Activated T-helper 2 cell treated with anti-CD3 and anti-CD28 coated beads, Interferon-gamma antibody, Interleukin-2, Interleukin-4, amounts not matched to agents 10 μg/mL and 5 μg/mL and 100 μg/mL, durations not matched to agents 14 hours and 24 hours and 36 hours (primary cell): ENCODE measurements at regions of chr3 and their contacts with region 1.

Region 1: GRCh38 chr3:111859974-111860859 is 1.2 kb downstream of the PHLDB2 start:
- DNase-seq: peak; percentile 45
- H3K4me3 Mint-ChIP-seq: peak overlapping the region; percentile 86
- H3K27ac Mint-ChIP-seq: no peak overlapping the region
- H3K4me1 Mint-ChIP-seq: peaks cover 12% of the 10 kb centered on the region
- H3K27me3 Mint-ChIP-seq: peaks cover 79% of the 10 kb centered on the region

Region 2: DNA sequence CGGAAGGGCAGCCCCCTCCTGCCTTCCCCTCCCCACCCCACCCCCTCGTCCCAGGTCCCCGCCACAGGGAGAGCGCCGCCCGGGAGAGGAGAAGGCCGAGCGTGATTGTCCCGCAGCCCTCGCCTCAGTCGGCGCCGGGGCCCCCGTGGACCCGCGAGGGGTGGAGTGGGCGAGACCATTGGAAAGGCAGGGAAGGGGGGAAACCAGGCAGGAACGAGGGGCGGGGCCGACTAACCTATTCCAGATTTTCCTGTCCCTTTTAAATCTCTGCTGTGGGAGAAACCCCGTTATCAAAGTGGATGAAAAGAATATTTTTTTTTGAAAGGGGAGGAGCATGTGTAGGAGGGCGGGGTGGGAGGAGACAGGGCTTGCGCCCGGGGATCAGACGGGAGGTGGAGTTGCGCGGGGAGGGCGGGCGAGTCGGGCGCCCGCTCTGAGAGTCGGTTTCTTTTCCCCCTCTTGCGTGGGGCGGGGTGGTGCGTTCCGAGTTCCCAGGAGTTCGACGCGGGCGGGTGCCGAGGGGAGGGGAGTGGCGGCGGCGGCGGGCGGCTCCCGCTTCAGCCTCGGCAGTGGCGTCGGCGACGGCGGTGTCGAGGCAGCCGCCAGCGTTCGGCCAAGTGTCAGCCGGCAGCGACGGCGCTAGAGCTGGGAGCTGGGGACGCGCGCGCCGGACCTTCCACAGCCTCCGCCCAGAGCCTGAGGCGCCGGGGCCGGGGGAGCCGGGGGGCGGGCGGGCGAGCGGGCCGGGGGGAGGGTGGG is 788.8 kb before region 1 on chr3 and contains the start of gene NECTIN3:
- intact Hi-C with region 1: loop called (anchors 5 kb)
- DNase-seq: peak; percentile 70
- H3K4me3 Mint-ChIP-seq: peak within 1 kb of the TSS; percentile 87
- H3K27ac Mint-ChIP-seq: peak within 1 kb of the TSS; percentile 58
- H3K4me1 Mint-ChIP-seq: peaks cover 23% of the 10 kb centered on the region
- H3K27me3 Mint-ChIP-seq: peaks cover 69% of the 10 kb centered on the region
- total RNA-seq, gene NECTIN3: 2.2 and 2.6 TPM in 2 replicates

Region 3: GRCh38 chr3:111636366-111636885 is 223.8 kb before region 1 on chr3:
- intact Hi-C with region 1: no loop called
- DNase-seq: no peak
- H3K4me3 Mint-ChIP-seq: no peak overlapping the region
- H3K27ac Mint-ChIP-seq: no peak overlapping the region
- H3K4me1 Mint-ChIP-seq: peaks cover 2% of the 10 kb centered on the region
- H3K27me3 Mint-ChIP-seq: no peaks in the 10 kb centered on the region

Region 4: DNA sequence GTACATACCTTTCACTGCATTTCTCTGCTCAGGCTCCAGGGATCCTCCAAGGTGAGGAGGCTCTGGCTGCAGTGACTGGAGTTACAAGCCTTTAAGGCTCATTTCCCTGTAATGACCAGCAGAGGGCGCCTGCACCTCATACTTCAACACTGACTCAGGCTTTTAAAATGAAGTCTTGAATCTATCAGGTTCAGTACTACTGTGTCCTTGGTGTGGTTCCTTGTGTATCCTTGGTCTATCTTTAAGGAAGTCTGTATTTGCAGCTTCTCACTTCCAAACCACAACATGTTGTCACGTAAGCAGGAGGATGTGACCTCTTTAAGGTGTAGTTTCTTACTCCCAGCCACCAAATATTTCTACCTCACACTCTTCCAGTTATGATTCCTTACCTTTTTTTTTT is 142.6 kb before region 1 on chr3:
- intact Hi-C with region 1: loop called (anchors 1 kb)
- DNase-seq: peak; percentile 45
- H3K4me3 Mint-ChIP-seq: no peak overlapping the region
- H3K27ac Mint-ChIP-seq: no peak overlapping the region
- H3K4me1 Mint-ChIP-seq: peaks cover 1% of the 10 kb centered on the region
- H3K27me3 Mint-ChIP-seq: no peaks in the 10 kb centered on the region

Region 5: DNA sequence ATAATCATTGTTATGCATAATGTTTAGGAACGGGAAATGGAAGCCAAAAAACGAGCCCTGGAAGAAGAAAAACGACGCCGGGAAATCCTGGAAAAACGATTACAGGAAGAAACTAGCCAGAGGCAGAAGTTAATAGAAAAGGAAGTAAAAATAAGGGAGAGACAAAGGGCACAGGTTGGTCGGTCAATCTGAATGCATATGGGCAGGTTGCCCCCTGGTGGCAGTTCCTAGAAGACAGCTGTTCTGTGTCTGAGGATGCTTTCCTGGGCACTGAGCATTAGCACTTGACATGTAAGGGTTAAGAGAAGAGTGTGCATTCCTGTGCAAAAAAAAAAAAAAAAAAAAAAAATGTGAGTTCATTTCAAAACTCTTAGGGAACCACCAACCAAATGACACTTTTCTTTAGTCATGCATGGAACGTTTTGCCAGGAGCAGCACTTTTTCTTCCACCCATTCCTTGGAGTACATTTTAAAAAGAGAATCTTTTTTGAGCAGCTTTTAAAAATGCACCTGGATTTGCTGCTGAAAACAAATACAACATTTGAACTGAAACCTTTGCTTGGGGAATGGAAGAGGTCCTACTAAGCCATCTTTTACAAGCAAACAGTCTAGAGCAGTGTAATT is 107.5 kb after region 1 on chr3:
- intact Hi-C with region 1: loop called (anchors 5 kb)
- DNase-seq: peak; percentile 67
- H3K4me3 Mint-ChIP-seq: no peak overlapping the region
- H3K27ac Mint-ChIP-seq: no peak overlapping the region
- H3K4me1 Mint-ChIP-seq: peaks cover 17% of the 10 kb centered on the region
- H3K27me3 Mint-ChIP-seq: peaks cover 6% of the 10 kb centered on the region

Region 6: GRCh38 chr3:112308151-112308911 is 448.1 kb after region 1 on chr3:
- intact Hi-C with region 1: no loop called
- DNase-seq: no peak
- H3K4me3 Mint-ChIP-seq: no peak overlapping the region
- H3K27ac Mint-ChIP-seq: no peak overlapping the region
- H3K4me1 Mint-ChIP-seq: peaks cover 7% of the 10 kb centered on the region
- H3K27me3 Mint-ChIP-seq: no peaks in the 10 kb centered on the region